ENCODE measurements at regions of chr11 and their contacts with region 1.

Region 1: DNA sequence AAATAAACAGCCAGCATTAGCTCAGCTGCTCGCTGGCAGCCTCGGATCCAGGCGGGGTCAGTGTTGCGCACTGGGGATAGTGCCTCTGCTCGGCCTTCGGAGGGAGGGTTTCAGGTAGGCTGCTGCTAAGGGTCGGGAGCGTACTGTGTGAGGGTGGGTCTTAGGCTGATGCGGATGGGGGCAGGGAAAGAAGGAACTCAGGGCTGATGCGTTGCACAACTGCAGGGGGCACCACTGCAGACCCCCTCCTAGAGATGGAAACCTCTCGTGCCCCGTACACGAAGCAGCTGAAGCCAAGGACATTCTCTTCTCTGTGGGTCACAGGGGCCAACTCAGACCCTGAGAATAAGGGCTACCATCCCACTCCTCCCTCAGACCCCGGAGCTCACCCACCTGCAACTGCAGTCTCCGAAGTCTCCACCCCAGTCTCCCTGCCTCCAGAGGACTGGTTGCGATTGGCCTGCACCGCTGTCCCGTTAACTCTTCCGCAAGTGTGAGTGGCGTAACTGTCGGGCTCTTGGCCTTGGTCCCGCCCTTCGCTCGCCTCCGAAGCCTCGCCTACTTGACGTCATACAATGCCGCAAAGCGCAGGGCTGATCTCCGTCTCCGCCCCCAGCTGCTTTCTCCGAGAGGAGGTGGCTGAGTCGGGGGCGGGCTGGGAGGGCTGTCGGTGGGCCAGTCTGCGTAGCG is at the start of gene KBTBD3:
- DNase-seq: peak; percentile 99
- ATAC-seq: peak; percentile 96
- H3K4me3 ChIP-seq: peak within 1 kb of the TSS; percentile 91
- H3K27ac ChIP-seq: peak within 1 kb of the TSS; percentile 97
- H3K4me1 ChIP-seq: no peaks in the 10 kb centered on the region; the same call in 1 of the 2 replicates
- H3K27me3 ChIP-seq: no peaks in the 10 kb centered on the region
- CTCF ChIP-seq: no peak; the same call in 1 of the 2 replicates
- POLR2A ChIP-seq: no peak
- RAD21 ChIP-seq: peak; percentile 9; the same call in 1 of the 2 replicates
- total RNA-seq, gene KBTBD3: 1.6 and 2.2 TPM in 2 replicates

Region 2: GRCh38 chr11:105937331-105937730 is 139.7 kb before region 1 on chr11:
- CTCF ChIA-PET with region 1: no interaction called
- POLR2A ChIA-PET with region 1: no interaction called
- dilution Hi-C with region 1: no loop called
- in situ Hi-C with region 1: no loop called
- intact Hi-C with region 1: loop called (anchors 10 kb)
- DNase-seq: peak; percentile 67
- ATAC-seq: peak; percentile 80
- H3K4me3 ChIP-seq: no peak overlapping the region
- H3K27ac ChIP-seq: peak overlapping the region; percentile 100; the same call in 1 of the 2 replicates
- H3K4me1 ChIP-seq: peaks cover 11% of the 10 kb centered on the region
- H3K27me3 ChIP-seq: no peaks in the 10 kb centered on the region
- CTCF ChIP-seq: no peak
- POLR2A ChIP-seq: no peak
- RAD21 ChIP-seq: no peak

Region 3: GRCh38 chr11:106021967-106022794 is 54.9 kb before region 1 on chr11 and contains the start of gene MSANTD4:
- CTCF ChIA-PET with region 1: interaction called, 3 read pairs
- POLR2A ChIA-PET with region 1: no interaction called
- dilution Hi-C with region 1: no loop called
- in situ Hi-C with region 1: no loop called
- intact Hi-C with region 1: loop called (anchors 2 kb)
- DNase-seq: peak; percentile 99
- ATAC-seq: peak; percentile 99
- H3K4me3 ChIP-seq: peak within 1 kb of the TSS; percentile 76
- H3K27ac ChIP-seq: peak within 1 kb of the TSS; percentile 61
- H3K4me1 ChIP-seq: no peaks in the 10 kb centered on the region; the same call in 1 of the 2 replicates
- H3K27me3 ChIP-seq: no peaks in the 10 kb centered on the region
- CTCF ChIP-seq: no peak
- POLR2A ChIP-seq: no peak; the same call in 1 of the 2 replicates
- RAD21 ChIP-seq: no peak
- total RNA-seq, gene MSANTD4: 18.8 and 30.3 TPM in 2 replicates

Measured in IMR-90 (cell line).